IMR-90 (cell line): ENCODE measurements at regions of chr1 and their contacts with region 1.

Region 1: GRCh38 chr1:17700945-17701810 is 54.0 kb upstream of the ACTL8 start:
- DNase-seq: no peak
- ATAC-seq: no peak
- H3K4me3 ChIP-seq: no peak overlapping the region
- H3K27ac ChIP-seq: no peak overlapping the region
- H3K4me1 ChIP-seq: peaks cover 1% of the 10 kb centered on the region; the same call in 1 of the 2 replicates
- H3K27me3 ChIP-seq: peaks cover 8% of the 10 kb centered on the region; the same call in 1 of the 2 replicates
- CTCF ChIP-seq: no peak
- POLR2A ChIP-seq: no peak
- RAD21 ChIP-seq: no peak

Region 2: DNA sequence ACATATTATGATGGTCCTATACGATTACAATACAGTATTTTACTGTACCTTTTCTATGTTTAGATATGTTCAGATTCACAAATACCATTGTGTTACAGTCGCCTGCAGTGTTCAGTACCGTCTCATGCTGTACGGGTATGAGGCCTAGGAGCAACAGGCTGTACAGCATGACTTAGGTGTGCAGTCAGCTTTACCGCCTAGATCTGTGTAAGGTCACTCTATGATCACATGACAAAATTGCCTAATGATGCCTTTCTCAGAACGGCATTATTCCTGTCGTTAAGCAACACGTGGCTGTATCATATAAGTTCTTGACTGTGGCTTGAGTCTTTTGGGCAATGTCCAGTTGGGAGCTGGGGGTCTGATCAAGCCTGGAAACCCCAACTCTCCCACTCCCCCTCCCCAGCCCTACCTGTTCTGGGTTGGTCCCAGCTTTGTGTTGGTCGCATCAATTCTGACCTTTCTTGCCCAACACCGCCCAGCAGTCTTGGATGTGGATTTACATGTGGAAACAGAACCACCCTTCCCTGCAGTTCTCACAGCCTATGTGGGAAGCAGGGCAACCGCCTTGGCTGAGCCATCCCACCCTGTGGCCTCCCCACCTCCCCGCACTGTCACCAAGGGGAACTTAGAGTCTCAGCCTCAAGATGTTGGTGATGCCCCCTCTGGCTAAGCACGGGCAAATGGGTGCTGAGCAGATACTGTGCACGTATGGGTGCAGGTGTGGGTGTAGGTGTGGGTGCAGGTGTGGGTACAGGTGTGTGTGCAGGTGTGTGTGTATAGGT is 26.3 kb before region 1 on chr1:
- CTCF ChIA-PET with region 1: no interaction called
- POLR2A ChIA-PET with region 1: no interaction called
- dilution Hi-C with region 1: no loop called
- in situ Hi-C with region 1: no loop called
- intact Hi-C with region 1: no loop called
- DNase-seq: peak; percentile 5
- ATAC-seq: peak; percentile 13; the same call in 1 of the 2 replicates
- H3K4me3 ChIP-seq: no peak overlapping the region
- H3K27ac ChIP-seq: no peak overlapping the region
- H3K4me1 ChIP-seq: no peaks in the 10 kb centered on the region
- H3K27me3 ChIP-seq: no peaks in the 10 kb centered on the region
- CTCF ChIP-seq: no peak
- POLR2A ChIP-seq: no peak
- RAD21 ChIP-seq: no peak

Region 3: DNA sequence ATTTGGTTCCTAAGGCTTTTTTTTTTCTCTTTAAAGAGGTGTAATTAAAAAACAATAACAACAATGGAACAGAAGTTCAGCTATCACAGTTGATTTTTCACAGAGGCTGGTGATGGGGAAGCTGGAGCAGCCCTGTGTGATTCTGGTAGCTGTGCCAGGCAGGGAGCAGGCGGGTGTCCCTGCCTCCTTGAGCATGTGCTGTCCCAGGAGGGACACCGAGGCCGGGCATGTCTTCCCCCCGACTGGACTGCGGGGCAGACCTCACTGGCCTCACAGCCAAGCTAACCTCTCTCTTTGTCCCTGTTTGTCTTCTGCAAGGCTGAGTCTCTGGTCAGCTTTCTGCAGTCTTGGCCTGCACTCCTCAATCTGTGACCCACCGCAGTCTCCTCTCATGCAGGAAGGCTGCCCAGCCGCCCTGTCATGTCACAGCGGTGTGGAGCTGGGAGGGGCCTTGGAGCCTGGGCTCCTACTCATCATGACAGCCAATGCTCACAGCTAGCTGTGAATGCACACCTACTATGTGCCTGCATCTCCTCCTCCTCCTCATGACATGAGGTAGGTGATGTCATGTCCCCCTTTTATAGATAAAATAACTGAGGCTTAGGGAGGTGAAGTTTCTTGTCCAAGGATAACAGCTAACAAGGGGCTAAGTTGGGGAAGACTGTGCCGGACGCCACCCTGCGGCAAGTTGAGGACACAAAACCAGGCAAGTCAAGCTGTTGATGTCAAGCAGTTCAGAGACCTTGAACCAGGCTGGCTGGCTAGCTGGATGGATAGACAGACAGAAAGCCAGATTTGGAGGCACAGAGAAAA is 43.7 kb after region 1 on chr1:
- CTCF ChIA-PET with region 1: no interaction called
- POLR2A ChIA-PET with region 1: no interaction called
- dilution Hi-C with region 1: no loop called
- in situ Hi-C with region 1: no loop called
- intact Hi-C with region 1: loop called (anchors 1 kb)
- DNase-seq: no peak
- ATAC-seq: no peak
- H3K4me3 ChIP-seq: no peak overlapping the region
- H3K27ac ChIP-seq: no peak overlapping the region
- H3K4me1 ChIP-seq: no peaks in the 10 kb centered on the region
- H3K27me3 ChIP-seq: peaks cover 19% of the 10 kb centered on the region; the same call in 1 of the 2 replicates
- CTCF ChIP-seq: no peak
- POLR2A ChIP-seq: no peak
- RAD21 ChIP-seq: no peak

Region 4: GRCh38 chr1:17922833-17923232 is 221.7 kb after region 1 on chr1:
- CTCF ChIA-PET with region 1: no interaction called
- POLR2A ChIA-PET with region 1: no interaction called
- dilution Hi-C with region 1: no loop called
- in situ Hi-C with region 1: no loop called
- intact Hi-C with region 1: no loop called
- DNase-seq: peak; percentile 12
- ATAC-seq: no peak
- H3K4me3 ChIP-seq: no peak overlapping the region
- H3K27ac ChIP-seq: no peak overlapping the region
- H3K4me1 ChIP-seq: no peaks in the 10 kb centered on the region
- H3K27me3 ChIP-seq: peaks cover 6% of the 10 kb centered on the region
- CTCF ChIP-seq: peak; percentile 44
- POLR2A ChIP-seq: no peak
- RAD21 ChIP-seq: peak; percentile 58